ENCODE measurements at regions of chr5 and their contacts with region 1.

Region 1: GRCh38 chr5:140346348-140347101 is at the start of gene HBEGF:
- DNase-seq: peak; percentile 92 to 96
- H3K4me3 ChIP-seq: peak within 1 kb of the TSS; percentile 86
- H3K4me3 Mint-ChIP-seq: peak within 1 kb of the TSS; percentile 71
- H3K27ac Mint-ChIP-seq: peak within 1 kb of the TSS; percentile 45
- H3K4me1 ChIP-seq: peaks cover 35% of the 10 kb centered on the region
- H3K4me1 Mint-ChIP-seq: peaks cover 32% of the 10 kb centered on the region
- H3K27me3 ChIP-seq: no peaks in the 10 kb centered on the region
- H3K27me3 Mint-ChIP-seq: no peaks in the 10 kb centered on the region
- CTCF ChIP-seq: peak; percentile 67 to 84
- total RNA-seq, gene HBEGF: 5.2 and 5.8 TPM in 2 replicates

Region 2: DNA sequence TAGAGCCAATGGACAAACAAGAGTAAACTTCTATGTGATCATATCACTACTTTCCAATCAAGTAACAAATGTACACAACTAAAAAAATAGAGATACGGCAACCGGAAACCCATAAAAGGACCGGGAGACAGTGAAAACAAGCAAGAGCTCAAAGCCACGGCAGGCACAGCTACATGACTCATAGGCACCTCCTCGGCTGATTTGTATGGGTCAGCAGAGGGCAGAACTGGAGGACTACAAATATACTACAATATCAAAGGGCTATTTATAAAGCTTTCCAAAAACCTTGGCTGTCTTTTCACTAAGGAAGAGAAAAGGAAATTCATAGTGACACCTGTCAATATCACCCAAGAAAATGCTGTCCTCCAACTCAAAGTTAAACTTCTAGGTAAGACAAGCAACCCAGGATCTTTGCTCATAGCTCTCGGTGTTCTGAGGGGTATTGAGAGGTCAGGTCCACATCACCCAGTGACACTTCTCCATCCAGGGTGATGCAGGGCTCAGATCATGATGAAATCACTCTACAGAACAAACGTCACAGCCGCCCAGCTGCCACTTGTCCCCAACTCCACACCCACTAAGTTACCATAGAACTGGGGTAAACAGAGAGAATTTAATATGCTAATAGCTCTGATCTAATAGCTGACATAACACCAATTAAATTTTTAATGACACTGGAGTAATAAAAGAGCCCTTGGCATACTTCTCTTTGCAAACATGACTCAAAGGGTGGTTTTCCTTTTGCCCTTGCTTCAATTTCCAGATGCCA is 84.9 kb before region 1 on chr5:
- CTCF ChIA-PET with region 1: interaction called, 39 read pairs
- POLR2A ChIA-PET with region 1: interaction called, 15 read pairs
- intact Hi-C with region 1: loop called (anchors 5 kb)
- DNase-seq: peak; percentile 73 to 76
- H3K4me3 ChIP-seq: no peak overlapping the region
- H3K4me3 Mint-ChIP-seq: peak overlapping the region; percentile 12
- H3K27ac Mint-ChIP-seq: peak overlapping the region; percentile 64
- H3K4me1 ChIP-seq: peaks cover 11% of the 10 kb centered on the region
- H3K4me1 Mint-ChIP-seq: peaks cover 35% of the 10 kb centered on the region
- H3K27me3 ChIP-seq: no peaks in the 10 kb centered on the region
- H3K27me3 Mint-ChIP-seq: no peaks in the 10 kb centered on the region
- CTCF ChIP-seq: peak in 1 of 2 experiments; percentile 11

Region 3: DNA sequence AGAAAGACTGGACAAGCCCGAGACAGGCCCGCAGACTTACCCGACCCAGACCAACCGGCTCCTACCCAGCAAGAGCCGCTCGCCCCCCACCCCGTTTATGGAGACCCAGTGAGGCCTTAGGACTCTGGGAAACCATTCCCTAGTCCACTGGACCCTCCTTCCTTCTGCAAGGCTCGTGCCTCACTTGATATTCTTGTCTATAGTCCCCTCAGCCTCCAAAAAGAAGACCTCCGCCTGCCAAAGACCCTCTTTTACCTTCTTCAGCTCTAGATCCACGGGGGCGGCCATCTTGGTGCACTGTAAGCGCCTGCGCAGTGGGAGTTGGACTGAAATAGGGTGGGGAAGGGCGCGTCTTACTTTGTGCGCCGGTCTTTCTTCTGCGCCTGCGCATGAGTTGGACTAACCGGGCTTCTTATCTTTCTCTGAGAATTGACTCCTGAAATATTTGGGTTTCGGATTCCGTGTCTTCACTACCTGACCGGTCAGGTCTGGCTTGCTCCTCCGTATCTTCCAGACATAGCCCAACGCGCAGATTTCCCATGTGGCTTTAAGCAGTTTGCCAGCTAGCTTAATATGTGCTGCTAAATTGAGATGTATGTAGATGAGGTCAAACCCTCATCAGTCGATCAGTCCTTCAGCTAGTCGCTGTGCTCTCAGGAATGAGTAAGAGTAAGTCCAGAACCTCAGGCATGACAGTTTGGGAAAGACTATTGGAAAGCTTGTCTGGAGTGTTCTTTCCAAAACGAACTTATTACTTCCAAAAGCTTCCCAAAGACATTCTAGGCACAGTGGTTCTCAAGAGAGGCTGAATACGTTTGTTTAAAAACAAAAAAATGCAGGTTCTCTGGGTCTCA is 43.5 kb before region 1 on chr5 and contains the start of gene PFDN1:
- CTCF ChIA-PET with region 1: interaction called, 13 read pairs
- POLR2A ChIA-PET with region 1: interaction called, 28 read pairs
- intact Hi-C with region 1: loop called (anchors 2 kb)
- DNase-seq: peak; percentile 95 to 97
- H3K4me3 ChIP-seq: peak within 1 kb of the TSS; percentile 56
- H3K4me3 Mint-ChIP-seq: peak within 1 kb of the TSS; percentile 100
- H3K27ac Mint-ChIP-seq: peak within 1 kb of the TSS; percentile 100
- H3K4me1 ChIP-seq: peaks cover 19% of the 10 kb centered on the region
- H3K4me1 Mint-ChIP-seq: peaks cover 7% of the 10 kb centered on the region
- H3K27me3 ChIP-seq: no peaks in the 10 kb centered on the region
- H3K27me3 Mint-ChIP-seq: no peaks in the 10 kb centered on the region
- CTCF ChIP-seq: no peak
- total RNA-seq, gene PFDN1: 81.1 and 82.3 TPM in 2 replicates

Region 4: GRCh38 chr5:140327589-140327988 is 18.9 kb before region 1 on chr5:
- CTCF ChIA-PET with region 1: interaction called, 25 read pairs
- POLR2A ChIA-PET with region 1: interaction called, 11 read pairs
- intact Hi-C with region 1: no loop called
- DNase-seq: no peak
- H3K4me3 ChIP-seq: no peak overlapping the region
- H3K4me3 Mint-ChIP-seq: no peak overlapping the region
- H3K27ac Mint-ChIP-seq: peak overlapping the region; percentile 43
- H3K4me1 ChIP-seq: peaks cover 43% of the 10 kb centered on the region
- H3K4me1 Mint-ChIP-seq: peaks cover 18% of the 10 kb centered on the region
- H3K27me3 ChIP-seq: no peaks in the 10 kb centered on the region
- H3K27me3 Mint-ChIP-seq: no peaks in the 10 kb centered on the region
- CTCF ChIP-seq: no peak

Region 5: DNA sequence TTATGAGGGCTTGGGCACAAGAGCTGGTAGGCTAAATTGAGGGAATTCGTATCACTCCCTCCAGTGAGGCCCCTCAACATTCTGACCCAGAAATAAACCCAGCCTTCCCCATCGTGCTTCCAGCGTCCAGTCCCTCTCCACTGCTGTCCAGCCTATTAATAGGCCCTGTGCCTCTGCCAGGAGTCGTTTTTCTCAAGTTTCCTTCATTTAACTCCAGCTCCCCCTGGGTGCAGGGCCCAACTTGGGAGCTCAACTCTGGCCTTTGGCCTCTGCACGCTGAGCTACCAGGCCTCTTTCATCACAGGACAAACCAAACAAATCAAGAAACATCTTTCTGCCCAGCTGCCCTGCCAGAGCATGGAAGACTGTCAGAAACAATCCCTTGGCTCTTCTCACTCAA is 10.1 kb before region 1 on chr5:
- CTCF ChIA-PET with region 1: interaction called, 24 read pairs
- POLR2A ChIA-PET with region 1: interaction called, 11 read pairs
- intact Hi-C with region 1: no loop called
- DNase-seq: peak in 1 of 2 experiments; percentile 30
- H3K4me3 ChIP-seq: no peak overlapping the region
- H3K4me3 Mint-ChIP-seq: no peak overlapping the region
- H3K27ac Mint-ChIP-seq: no peak overlapping the region
- H3K4me1 ChIP-seq: peaks cover 13% of the 10 kb centered on the region; the same call in 1 of the 2 replicates
- H3K4me1 Mint-ChIP-seq: peaks cover 11% of the 10 kb centered on the region
- H3K27me3 ChIP-seq: no peaks in the 10 kb centered on the region
- H3K27me3 Mint-ChIP-seq: no peaks in the 10 kb centered on the region
- CTCF ChIP-seq: no peak

Region 6: DNA sequence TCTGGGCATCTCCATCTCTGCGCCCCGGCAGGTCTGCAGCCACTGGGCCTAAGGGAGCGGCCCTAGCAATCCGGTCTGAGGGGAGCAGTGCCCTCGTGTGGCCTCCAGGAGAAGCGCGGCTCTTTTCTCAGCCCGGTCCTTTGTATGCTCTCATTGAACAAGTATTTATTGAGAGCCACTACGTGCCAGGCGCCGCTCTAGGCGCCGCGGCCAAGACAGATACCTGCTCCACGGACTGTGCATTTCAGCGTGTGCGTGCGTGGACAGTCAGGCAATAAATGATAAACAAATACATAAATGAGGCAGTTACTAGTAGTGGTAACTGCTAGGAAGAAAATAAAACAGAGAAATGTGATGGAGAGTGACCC is 11.2 kb after region 1 on chr5:
- CTCF ChIA-PET with region 1: interaction called, 30 read pairs
- POLR2A ChIA-PET with region 1: interaction called, 7 read pairs
- intact Hi-C with region 1: loop called (anchors 1 kb)
- DNase-seq: peak; percentile 88
- H3K4me3 ChIP-seq: no peak overlapping the region; the same call in 1 of the 2 replicates
- H3K4me3 Mint-ChIP-seq: peak overlapping the region; percentile 58
- H3K27ac Mint-ChIP-seq: peak overlapping the region; percentile 87
- H3K4me1 ChIP-seq: peaks cover 26% of the 10 kb centered on the region
- H3K4me1 Mint-ChIP-seq: peaks cover 22% of the 10 kb centered on the region
- H3K27me3 ChIP-seq: no peaks in the 10 kb centered on the region
- H3K27me3 Mint-ChIP-seq: no peaks in the 10 kb centered on the region
- CTCF ChIP-seq: peak; percentile 87 to 96

Region 7: GRCh38 chr5:140401362-140402257 is 55.1 kb after region 1 on chr5 and contains the start of gene ANKHD1:
- CTCF ChIA-PET with region 1: interaction called, 6 read pairs
- POLR2A ChIA-PET with region 1: interaction called, 16 read pairs
- intact Hi-C with region 1: no loop called
- DNase-seq: peak; percentile 99 to 100
- H3K4me3 ChIP-seq: peak within 1 kb of the TSS; percentile 72
- H3K4me3 Mint-ChIP-seq: no peak within 1 kb of the TSS
- H3K27ac Mint-ChIP-seq: no peak within 1 kb of the TSS
- H3K4me1 ChIP-seq: no peaks in the 10 kb centered on the region
- H3K4me1 Mint-ChIP-seq: peaks cover 7% of the 10 kb centered on the region
- H3K27me3 ChIP-seq: no peaks in the 10 kb centered on the region
- H3K27me3 Mint-ChIP-seq: no peaks in the 10 kb centered on the region
- CTCF ChIP-seq: no peak
- total RNA-seq, gene ANKHD1: 130 and 134 TPM in 2 replicates

Measured in Caco-2 (cell line).